GM13977 (cell line): ENCODE measurements at regions of chr2 and their contacts with region 1.

Region 1: GRCh38 chr2:130288461-130289403 is 54.0 kb upstream of the IMP4 start:
- DNase-seq: no peak
- CTCF ChIP-seq: no peak

Region 2: DNA sequence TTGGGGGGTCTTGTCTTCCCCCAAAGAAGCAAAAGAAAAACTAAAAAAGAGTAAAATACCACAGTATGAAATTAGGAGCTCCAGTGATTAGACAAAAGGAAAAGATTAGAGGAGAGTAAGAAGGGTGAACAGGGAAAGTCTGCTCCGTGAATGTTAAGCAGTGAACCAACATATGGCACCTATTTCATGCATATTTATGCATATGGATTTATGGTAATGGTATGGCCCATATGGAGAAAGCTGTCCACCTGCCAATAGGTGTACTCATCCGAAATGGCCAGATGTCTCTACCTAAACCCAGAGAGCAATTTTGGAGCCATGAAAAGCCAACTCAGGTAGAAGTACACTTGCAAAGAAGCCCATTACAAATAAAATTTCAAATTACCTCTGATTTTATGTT is 713.3 kb before region 1 on chr2:
- in situ Hi-C with region 1: no loop called
- DNase-seq: no peak
- CTCF ChIP-seq: no peak

Region 3: DNA sequence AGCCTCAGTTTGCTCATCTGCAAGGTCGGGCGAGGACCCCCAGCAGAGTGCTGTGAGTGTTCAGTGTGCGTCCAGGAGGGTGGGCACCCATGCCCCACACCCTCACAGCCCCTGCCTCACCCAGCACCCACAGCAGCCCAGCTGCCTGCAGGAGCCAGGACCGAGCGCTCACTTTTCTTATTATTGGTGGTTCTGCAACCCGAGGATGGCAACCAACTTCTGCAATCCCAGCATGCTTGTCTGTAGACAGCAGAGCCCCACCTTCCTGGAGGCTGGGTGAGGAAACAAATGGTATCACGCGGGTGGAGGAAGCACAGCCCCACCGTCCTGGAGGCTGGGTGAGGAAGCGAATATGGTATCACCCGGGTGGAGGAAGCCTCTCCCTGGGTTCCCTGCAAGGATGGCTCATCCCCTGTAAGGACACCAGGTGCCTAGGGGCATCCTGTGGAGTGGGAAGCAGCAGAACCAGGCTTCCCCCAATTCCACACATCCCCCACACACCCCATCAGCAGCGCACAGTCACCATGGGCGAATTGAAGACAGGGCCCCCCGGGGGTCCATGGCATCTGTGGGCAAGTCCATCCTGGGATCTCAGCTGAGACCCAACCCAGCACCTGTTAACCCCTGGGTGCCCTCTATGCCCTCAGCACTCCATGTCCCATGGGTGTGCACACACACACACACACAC is 529.8 kb before region 1 on chr2:
- in situ Hi-C with region 1: no loop called
- DNase-seq: no peak
- CTCF ChIP-seq: no peak

Region 4: DNA sequence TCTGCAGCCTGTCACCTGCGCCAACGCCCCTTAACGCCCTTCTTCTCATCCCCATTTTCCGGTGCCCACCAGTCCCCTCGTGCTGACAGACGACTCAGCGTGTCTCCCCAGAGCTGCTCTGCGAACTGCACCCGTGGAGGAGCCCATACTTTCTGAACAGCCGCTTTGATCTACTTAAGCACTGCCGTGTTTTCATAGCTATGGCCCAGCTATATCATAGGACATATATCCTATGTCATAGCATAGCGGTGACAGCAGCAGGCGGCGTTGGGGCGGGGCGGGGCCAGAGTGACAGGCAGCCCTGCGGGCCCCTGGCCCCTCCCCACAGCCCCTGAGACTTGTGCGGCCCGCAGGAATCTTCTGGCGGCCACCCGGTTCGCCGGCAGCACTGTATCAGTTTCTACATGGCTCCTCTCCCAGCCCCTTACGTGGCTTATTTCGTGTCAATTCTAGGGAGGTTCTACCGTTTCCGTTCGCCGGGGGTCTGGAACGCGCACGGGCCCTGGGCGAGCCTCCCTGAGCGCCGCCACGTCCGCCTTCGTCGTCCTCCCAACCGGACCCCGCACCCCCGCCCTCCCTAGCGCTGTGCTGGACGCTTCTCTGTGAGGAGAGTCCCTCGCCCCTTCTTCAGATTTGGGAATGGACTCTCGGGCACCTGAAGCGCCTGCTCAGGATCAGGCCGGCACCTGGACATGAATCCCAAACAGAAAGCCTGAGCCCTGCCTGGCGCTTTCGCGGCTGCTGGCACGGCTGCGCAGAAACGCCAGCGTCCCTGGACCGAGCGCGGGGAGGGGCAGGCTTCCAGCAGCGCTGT is 102.5 kb after region 1 on chr2:
- in situ Hi-C with region 1: loop called (anchors 25 kb)
- DNase-seq: peak; percentile 81
- CTCF ChIP-seq: no peak